A549 (cell line): ENCODE measurements at regions of chr16 and their contacts with region 1.

Region 1: GRCh38 chr16:11386791-11387546 is 41.7 kb downstream of the RMI2 start:
- DNase-seq: peak; percentile 30 to 60
- ATAC-seq: peak; percentile 70 to 91; a peak in 5 of 6 replicates
- H3K4me3 ChIP-seq: no peak overlapping the region
- H3K27ac ChIP-seq: 0 out of 6 replicates have a peak overlapping the region, but pooled peaks of 1 of the 2 experiments have one; percentile 19
- H3K4me1 ChIP-seq: no peaks in the 10 kb centered on the region
- CTCF ChIP-seq: peak; percentile 45
- EP300 ChIP-seq: no peak
- POLR2A ChIP-seq: no peak
- RAD21 ChIP-seq: peak; percentile 32 to 33; a peak in 2 of 5 replicates

Region 2: GRCh38 chr16:11349599-11350276 is 37.2 kb before region 1 on chr16:
- CTCF ChIA-PET with region 1: no interaction called
- POLR2A ChIA-PET with region 1: no interaction called
- DNase-seq: no peak
- ATAC-seq: no peak
- H3K4me3 ChIP-seq: no peak overlapping the region
- H3K27ac ChIP-seq: no peak overlapping the region
- H3K4me1 ChIP-seq: peaks cover 5% of the 10 kb centered on the region; the same call in 2 of the 3 replicates
- CTCF ChIP-seq: no peak
- EP300 ChIP-seq: no peak
- POLR2A ChIP-seq: no peak
- RAD21 ChIP-seq: no peak

Region 3: GRCh38 chr16:11370084-11370931 is 16.7 kb before region 1 on chr16:
- CTCF ChIA-PET with region 1: interaction called, 18 read pairs
- POLR2A ChIA-PET with region 1: no interaction called
- DNase-seq: no peak
- ATAC-seq: no peak; a peak in 1 of 6 replicates
- H3K4me3 ChIP-seq: no peak overlapping the region
- H3K27ac ChIP-seq: no peak overlapping the region
- H3K4me1 ChIP-seq: no peaks in the 10 kb centered on the region
- CTCF ChIP-seq: no peak
- EP300 ChIP-seq: no peak
- POLR2A ChIP-seq: no peak
- RAD21 ChIP-seq: no peak